H1 (cell line): ENCODE measurements at regions of chr1 and their contacts with region 1.

Region 1: DNA sequence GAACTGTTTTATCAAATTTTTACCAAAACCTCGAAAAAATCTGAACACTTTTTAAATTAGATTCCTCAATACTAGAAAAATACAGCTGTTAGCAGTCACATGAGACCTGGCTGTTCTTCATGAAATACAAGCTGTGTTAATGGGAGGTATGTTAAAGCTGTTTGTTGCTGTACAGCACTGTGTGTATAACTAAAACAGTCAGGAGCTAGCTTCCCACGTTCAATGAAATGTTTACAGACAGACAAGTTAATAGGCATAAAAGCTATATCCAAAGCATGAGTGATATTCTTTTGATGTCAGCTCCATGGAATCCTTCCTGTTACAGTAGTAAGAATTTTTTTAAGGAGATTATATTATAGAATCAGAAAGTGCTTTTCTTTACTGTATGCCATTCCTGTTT is 223.2 kb upstream of the FOXD3 start:
- DNase-seq: no peak
- H3K4me3 ChIP-seq: no peak overlapping the region
- H3K27ac ChIP-seq: no peak overlapping the region
- H3K4me1 ChIP-seq: 0 out of 7 replicates have a peak, but pooled peaks cover 0 to 3% (median 0%) of the 10 kb centered on the region in 4 experiments
- H3K27me3 ChIP-seq: no peaks in the 10 kb centered on the region
- CTCF ChIP-seq: no peak
- EP300 ChIP-seq: no peak
- POLR2A ChIP-seq: no peak
- RAD21 ChIP-seq: no peak

Region 2: GRCh38 chr1:63049135-63049534 is 50.1 kb before region 1 on chr1:
- CTCF ChIA-PET with region 1: no interaction called
- POLR2A ChIA-PET with region 1: no interaction called
- DNase-seq: no peak
- H3K4me3 ChIP-seq: no peak overlapping the region
- H3K27ac ChIP-seq: no peak overlapping the region
- H3K4me1 ChIP-seq: peaks cover 0 to 2% (median under 1%) of the 10 kb centered on the region in 4 experiments; a peak in 2 of 7 replicates
- H3K27me3 ChIP-seq: no peaks in the 10 kb centered on the region
- CTCF ChIP-seq: no peak
- EP300 ChIP-seq: no peak
- POLR2A ChIP-seq: no peak
- RAD21 ChIP-seq: no peak

Region 3: GRCh38 chr1:63063367-63063766 is 35.8 kb before region 1 on chr1:
- CTCF ChIA-PET with region 1: interaction called, 10 read pairs
- POLR2A ChIA-PET with region 1: no interaction called
- DNase-seq: peak in 1 of 2 experiments; percentile 80
- H3K4me3 ChIP-seq: no peak overlapping the region
- H3K27ac ChIP-seq: no peak overlapping the region
- H3K4me1 ChIP-seq: no peaks in the 10 kb centered on the region
- H3K27me3 ChIP-seq: no peaks in the 10 kb centered on the region
- CTCF ChIP-seq: peak; percentile 49 to 73 (median 69)
- EP300 ChIP-seq: no peak
- POLR2A ChIP-seq: no peak
- RAD21 ChIP-seq: peak; percentile 73 to 80

Region 4: DNA sequence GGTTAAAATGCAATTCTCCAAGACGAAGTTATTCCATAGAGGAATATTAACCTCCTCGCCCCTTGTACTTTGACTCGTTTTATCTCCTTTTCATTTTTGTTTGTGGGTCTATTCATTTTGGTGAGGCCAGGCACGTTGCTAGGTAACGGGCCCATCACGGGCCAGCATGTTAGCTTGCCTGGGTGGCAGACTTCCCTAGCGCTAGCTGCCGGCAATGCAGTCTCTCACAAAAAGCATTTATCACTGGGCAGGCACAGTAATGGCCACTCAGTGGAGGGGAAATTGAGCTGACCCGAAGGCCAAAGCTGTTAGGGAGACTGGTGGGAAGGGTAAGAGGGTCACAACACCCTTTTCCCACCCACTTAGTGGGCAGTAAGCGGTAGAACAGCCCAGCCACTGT is 11.2 kb before region 1 on chr1:
- CTCF ChIA-PET with region 1: interaction called, 17 read pairs
- POLR2A ChIA-PET with region 1: no interaction called
- DNase-seq: peak in 1 of 2 experiments; percentile 65
- H3K4me3 ChIP-seq: no peak overlapping the region
- H3K27ac ChIP-seq: no peak overlapping the region
- H3K4me1 ChIP-seq: peaks cover 0 to 3% (median 1%) of the 10 kb centered on the region in 4 experiments; a peak in 2 of 7 replicates
- H3K27me3 ChIP-seq: no peaks in the 10 kb centered on the region; a peak in 1 of 7 replicates
- CTCF ChIP-seq: peak; percentile 48 to 66 (median 61)
- EP300 ChIP-seq: no peak
- POLR2A ChIP-seq: no peak
- RAD21 ChIP-seq: peak; percentile 45 to 47; a peak in 3 of 4 replicates

Region 5: GRCh38 chr1:63112155-63112900 is 13.1 kb after region 1 on chr1:
- CTCF ChIA-PET with region 1: interaction called, 10 read pairs
- POLR2A ChIA-PET with region 1: interaction called, 3 read pairs
- DNase-seq: peak in 1 of 2 experiments; percentile 17
- H3K4me3 ChIP-seq: no peak overlapping the region
- H3K27ac ChIP-seq: no peak overlapping the region
- H3K4me1 ChIP-seq: peaks cover 0 to 4% (median 2%) of the 10 kb centered on the region in 4 experiments; a peak in 3 of 7 replicates
- H3K27me3 ChIP-seq: no peaks in the 10 kb centered on the region
- CTCF ChIP-seq: no peak
- EP300 ChIP-seq: no peak
- POLR2A ChIP-seq: no peak
- RAD21 ChIP-seq: no peak